GM12878 (cell line): ENCODE measurements at regions of chr11 and their contacts with region 1.

Region 1: DNA sequence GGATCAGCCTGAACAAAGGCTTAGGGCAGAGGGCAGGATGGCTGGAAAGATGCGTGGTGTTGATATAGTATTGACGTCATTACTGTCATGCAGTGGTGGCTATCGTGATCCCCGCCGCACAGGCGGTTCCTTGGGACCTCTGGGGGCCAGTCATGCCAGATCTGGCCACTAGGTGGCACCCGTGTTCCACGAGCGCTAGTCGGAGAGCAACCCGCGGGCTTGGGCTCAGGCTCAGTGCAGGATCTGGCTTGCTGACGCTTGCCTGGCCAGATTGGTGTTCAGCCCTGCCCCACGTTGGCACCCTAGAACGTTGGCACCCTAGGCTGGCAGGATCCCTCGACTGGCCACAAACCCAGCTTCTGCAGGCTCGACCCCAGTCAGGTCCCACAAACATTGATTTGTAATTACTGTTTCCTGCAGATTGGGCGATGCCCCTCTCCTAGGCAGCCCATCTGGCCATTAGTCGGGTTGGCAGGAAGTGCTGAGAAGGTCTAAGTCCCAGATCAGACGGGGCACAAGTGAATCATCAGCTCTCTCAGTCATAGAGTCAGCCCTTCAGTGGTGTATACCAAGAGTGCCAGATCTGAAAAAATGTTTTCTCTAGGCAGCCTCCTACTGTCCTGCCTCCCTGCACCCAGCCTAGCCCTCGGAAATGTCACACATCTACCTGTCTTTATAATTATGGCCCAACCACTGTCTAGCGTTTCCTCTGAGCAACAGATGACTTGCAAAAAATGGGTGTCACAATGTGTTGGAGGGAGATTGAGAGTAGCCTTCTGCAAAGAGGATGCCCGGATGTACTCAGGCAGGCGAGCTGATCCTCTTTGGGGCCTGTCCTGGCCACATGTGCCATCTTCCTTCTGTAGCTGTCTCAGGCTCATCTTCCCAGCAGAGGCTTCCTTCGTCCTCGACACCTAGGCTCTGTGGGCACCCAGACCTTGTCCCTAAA is 315.3 kb downstream of the TMEM135 start:
- DNase-seq: no peak
- ATAC-seq: peak; percentile 98
- H3K4me3 ChIP-seq: no peak overlapping the region
- H3K27ac ChIP-seq: no peak overlapping the region
- H3K4me1 ChIP-seq: no peaks in the 10 kb centered on the region
- H3K27me3 ChIP-seq: no peaks in the 10 kb centered on the region
- CTCF ChIP-seq: peak; percentile 97 to 98 (median 98); a peak in 5 of 6 replicates
- EP300 ChIP-seq: no peak
- POLR2A ChIP-seq: no peak
- RAD21 ChIP-seq: peak; percentile 90

Region 2: DNA sequence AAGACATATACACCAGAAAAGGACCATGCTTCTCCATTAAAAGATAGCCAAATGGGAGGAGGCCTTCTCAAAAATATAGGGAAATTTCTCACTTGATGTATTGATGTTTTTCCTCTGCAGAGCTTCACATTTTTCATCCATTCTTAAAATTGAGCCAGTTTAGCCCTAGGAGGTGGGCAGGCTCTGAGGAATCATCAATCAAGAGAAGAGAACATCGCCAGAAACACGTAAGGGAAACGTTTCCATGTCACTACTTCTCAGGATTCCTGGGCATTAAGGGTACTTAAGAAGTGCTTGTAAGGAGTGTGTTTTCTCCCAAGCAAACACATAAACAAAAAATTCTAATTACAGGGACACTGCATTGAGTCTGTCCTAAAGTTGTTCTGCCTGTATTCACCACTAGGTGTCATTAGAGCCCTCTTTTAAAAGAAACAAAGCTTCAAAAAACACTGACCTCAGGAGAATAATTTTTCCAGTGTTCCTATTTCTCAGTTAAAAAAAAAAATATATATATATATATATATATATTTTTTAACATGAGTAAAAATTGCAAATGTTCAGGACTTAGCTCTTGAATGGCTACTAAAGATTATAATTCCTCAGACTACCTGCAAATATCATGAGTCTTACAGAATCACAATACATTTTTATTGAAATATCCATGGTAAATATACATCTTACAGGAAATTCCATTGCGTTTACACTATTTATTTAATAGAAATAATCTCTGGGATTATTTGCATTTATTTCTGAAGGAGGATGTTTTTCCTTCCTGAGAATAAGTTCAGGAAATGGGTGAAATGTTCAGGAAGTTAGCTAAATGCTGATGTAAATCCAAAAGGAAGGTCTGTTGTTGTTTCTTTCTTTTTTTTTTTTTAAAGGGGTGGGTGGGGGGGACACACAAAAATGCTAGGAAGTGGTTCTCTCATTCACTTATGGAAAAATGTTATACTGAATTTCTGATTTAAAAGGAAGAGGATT is 413.8 kb before region 1 on chr11:
- CTCF ChIA-PET with region 1: interaction called, 11 read pairs
- POLR2A ChIA-PET with region 1: no interaction called
- RAD21 ChIA-PET with region 1: interaction called, 3 read pairs
- SMC1A ChIA-PET with region 1: interaction called, 3 read pairs
- in situ Hi-C with region 1: no loop called
- intact Hi-C with region 1: loop called (anchors 5 kb)
- DNase-seq: no peak
- ATAC-seq: peak; percentile 81
- H3K4me3 ChIP-seq: no peak overlapping the region
- H3K27ac ChIP-seq: no peak overlapping the region
- H3K4me1 ChIP-seq: no peaks in the 10 kb centered on the region
- H3K27me3 ChIP-seq: no peaks in the 10 kb centered on the region; a peak in 1 of 4 replicates
- CTCF ChIP-seq: peak; percentile 51 to 66 (median 53); a peak in 5 of 6 replicates
- EP300 ChIP-seq: no peak
- POLR2A ChIP-seq: no peak
- RAD21 ChIP-seq: peak; percentile 75

Region 3: DNA sequence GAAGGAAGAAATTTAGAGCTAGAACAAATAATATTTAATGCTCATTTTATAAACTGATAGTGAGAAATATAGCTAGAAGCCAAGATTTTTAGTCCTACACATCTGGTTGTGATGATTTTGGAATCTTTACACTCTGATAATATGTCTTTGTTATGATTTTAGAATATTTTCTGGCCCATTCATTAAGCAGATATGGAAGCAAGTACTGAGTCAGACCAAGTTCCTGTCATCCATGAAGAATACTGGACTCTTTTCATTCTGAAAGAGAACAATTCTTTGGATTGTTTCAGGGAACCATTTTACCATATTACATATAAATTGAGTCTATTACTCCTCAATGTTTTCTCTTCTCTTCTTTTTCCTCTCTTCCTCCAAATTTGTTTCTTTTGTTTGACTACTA is 87.9 kb before region 1 on chr11:
- CTCF ChIA-PET with region 1: no interaction called
- POLR2A ChIA-PET with region 1: no interaction called
- RAD21 ChIA-PET with region 1: no interaction called
- SMC1A ChIA-PET with region 1: no interaction called
- in situ Hi-C with region 1: no loop called
- intact Hi-C with region 1: no loop called
- DNase-seq: no peak
- ATAC-seq: no peak
- H3K4me3 ChIP-seq: no peak overlapping the region
- H3K27ac ChIP-seq: no peak overlapping the region
- H3K4me1 ChIP-seq: no peaks in the 10 kb centered on the region
- H3K27me3 ChIP-seq: no peaks in the 10 kb centered on the region
- CTCF ChIP-seq: no peak
- EP300 ChIP-seq: no peak
- POLR2A ChIP-seq: no peak
- RAD21 ChIP-seq: no peak

Region 4: GRCh38 chr11:87421422-87421821 is 68.4 kb after region 1 on chr11:
- CTCF ChIA-PET with region 1: interaction called, 48 read pairs
- POLR2A ChIA-PET with region 1: no interaction called
- RAD21 ChIA-PET with region 1: interaction called, 10 read pairs
- SMC1A ChIA-PET with region 1: interaction called, 10 read pairs
- in situ Hi-C with region 1: loop called (anchors 5 kb)
- intact Hi-C with region 1: loop called (anchors 1 kb)
- DNase-seq: peak; percentile 27
- ATAC-seq: peak; percentile 95
- H3K4me3 ChIP-seq: no peak overlapping the region
- H3K27ac ChIP-seq: no peak overlapping the region
- H3K4me1 ChIP-seq: no peaks in the 10 kb centered on the region
- H3K27me3 ChIP-seq: no peaks in the 10 kb centered on the region
- CTCF ChIP-seq: peak; percentile 72 to 73 (median 73)
- EP300 ChIP-seq: no peak
- POLR2A ChIP-seq: no peak
- RAD21 ChIP-seq: peak; percentile 64

Region 5: GRCh38 chr11:88552377-88553062 is 1199.5 kb after region 1 on chr11:
- CTCF ChIA-PET with region 1: no interaction called
- POLR2A ChIA-PET with region 1: no interaction called
- RAD21 ChIA-PET with region 1: no interaction called
- SMC1A ChIA-PET with region 1: no interaction called
- in situ Hi-C with region 1: loop called (anchors 5 kb)
- intact Hi-C with region 1: loop called (anchors 5 kb)
- DNase-seq: peak; percentile 12
- ATAC-seq: peak; percentile 100
- H3K4me3 ChIP-seq: no peak overlapping the region
- H3K27ac ChIP-seq: no peak overlapping the region
- H3K4me1 ChIP-seq: no peaks in the 10 kb centered on the region
- H3K27me3 ChIP-seq: peaks cover 0 to 10% of the 10 kb centered on the region in 2 experiments; a peak in 2 of 4 replicates
- CTCF ChIP-seq: peak; percentile 84 to 93 (median 91)
- EP300 ChIP-seq: no peak
- POLR2A ChIP-seq: no peak
- RAD21 ChIP-seq: peak; percentile 86

Region 6: GRCh38 chr11:88886796-88887195 is 1533.8 kb after region 1 on chr11:
- CTCF ChIA-PET with region 1: no interaction called
- POLR2A ChIA-PET with region 1: no interaction called
- RAD21 ChIA-PET with region 1: no interaction called
- SMC1A ChIA-PET with region 1: no interaction called
- in situ Hi-C with region 1: loop called (anchors 25 kb)
- intact Hi-C with region 1: no loop called
- DNase-seq: peak; percentile 11
- ATAC-seq: peak; percentile 98
- H3K4me3 ChIP-seq: no peak overlapping the region
- H3K27ac ChIP-seq: no peak overlapping the region
- H3K4me1 ChIP-seq: no peaks in the 10 kb centered on the region
- H3K27me3 ChIP-seq: no peaks in the 10 kb centered on the region
- CTCF ChIP-seq: peak; percentile 62 to 64 (median 62); a peak in 5 of 6 replicates
- EP300 ChIP-seq: no peak
- POLR2A ChIP-seq: no peak
- RAD21 ChIP-seq: peak; percentile 80